ENCODE measurements at regions of chr6 and their contacts with region 1.

Region 1: DNA sequence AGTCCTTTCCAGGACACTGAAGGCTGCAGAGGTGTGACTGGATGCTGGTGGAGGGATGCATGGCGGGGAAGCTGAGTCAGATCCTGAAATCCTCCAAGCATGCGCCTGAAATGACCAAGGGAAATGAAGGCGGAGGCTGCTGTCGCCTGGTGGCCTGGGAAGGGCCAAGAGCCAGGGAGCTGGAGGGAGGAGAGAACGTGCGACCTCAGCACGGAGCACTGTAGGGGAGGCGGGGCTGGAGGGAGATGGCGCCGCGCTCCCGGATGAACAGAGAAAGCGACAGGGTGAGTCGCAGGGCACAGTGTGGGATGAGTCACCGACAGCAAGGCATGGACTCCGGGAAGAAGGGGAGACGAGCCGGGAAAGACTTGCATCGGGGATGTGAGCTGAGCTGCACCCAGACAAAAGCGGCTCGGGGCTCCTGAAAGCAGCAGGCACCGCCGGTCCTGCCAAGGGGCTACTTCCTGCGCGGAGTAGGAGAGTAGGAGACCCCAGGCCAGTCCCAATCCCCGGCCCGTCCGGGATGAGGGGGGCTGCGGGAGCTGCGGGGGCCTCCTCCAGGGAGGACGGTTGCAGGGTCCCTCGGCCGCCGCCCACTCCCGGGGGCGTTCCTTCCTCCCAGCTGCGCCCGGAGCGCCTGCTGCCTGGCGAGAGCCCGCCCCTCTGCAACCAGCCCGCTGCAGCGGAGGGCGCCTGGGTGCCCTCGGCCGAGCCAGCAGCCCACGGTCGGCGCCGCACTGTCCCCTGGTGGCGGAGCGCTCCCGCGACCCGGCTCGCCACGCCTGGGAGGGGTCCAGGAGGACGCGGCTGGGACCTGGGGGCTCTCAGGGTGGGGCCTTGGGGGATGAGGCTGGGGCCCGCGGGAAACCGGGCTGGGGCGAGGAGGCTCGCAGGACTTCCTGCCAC is 11.0 kb upstream of the NQO2 start:
- DNase-seq: peak; percentile 84 to 92
- H3K4me3 ChIP-seq: peak overlapping the region; percentile 52 to 70 (median 62)
- H3K27ac ChIP-seq: peak overlapping the region; percentile 99
- H3K4me1 ChIP-seq: peaks cover 8 to 26% (median 16%) of the 10 kb centered on the region in 4 experiments
- H3K27me3 ChIP-seq: no peaks in the 10 kb centered on the region
- CTCF ChIP-seq: peak; percentile 80 to 87 (median 82)
- EP300 ChIP-seq: peak in 1 of 2 experiments; percentile 2; a peak in 1 of 3 replicates
- POLR2A ChIP-seq: peak; percentile 68 to 94
- RAD21 ChIP-seq: peak; percentile 65 to 85

Region 2: GRCh38 chr6:2848851-2849250 is 139.8 kb before region 1 on chr6:
- CTCF ChIA-PET with region 1: interaction called, 39 read pairs
- POLR2A ChIA-PET with region 1: interaction called, 15 read pairs
- DNase-seq: no peak
- H3K4me3 ChIP-seq: no peak overlapping the region
- H3K27ac ChIP-seq: no peak overlapping the region
- H3K4me1 ChIP-seq: peaks cover 4 to 25% (median 9%) of the 10 kb centered on the region in 4 experiments
- H3K27me3 ChIP-seq: no peaks in the 10 kb centered on the region
- CTCF ChIP-seq: no peak
- EP300 ChIP-seq: no peak
- POLR2A ChIP-seq: peak in 1 of 2 experiments; percentile 62; a peak in 1 of 3 replicates
- RAD21 ChIP-seq: no peak

Region 3: GRCh38 chr6:2947445-2947844 is 41.2 kb before region 1 on chr6:
- CTCF ChIA-PET with region 1: interaction called, 142 read pairs
- POLR2A ChIA-PET with region 1: interaction called, 17 read pairs
- DNase-seq: peak in 1 of 2 experiments; percentile 30
- H3K4me3 ChIP-seq: no peak overlapping the region
- H3K27ac ChIP-seq: no peak overlapping the region
- H3K4me1 ChIP-seq: peaks cover 0 to 3% (median 1%) of the 10 kb centered on the region in 4 experiments; a peak in 4 of 7 replicates
- H3K27me3 ChIP-seq: no peaks in the 10 kb centered on the region
- CTCF ChIP-seq: no peak
- EP300 ChIP-seq: no peak
- POLR2A ChIP-seq: no peak
- RAD21 ChIP-seq: no peak

Region 4: GRCh38 chr6:2966347-2966746 is 22.3 kb before region 1 on chr6:
- CTCF ChIA-PET with region 1: interaction called, 11 read pairs
- POLR2A ChIA-PET with region 1: interaction called, 10 read pairs
- DNase-seq: no peak
- H3K4me3 ChIP-seq: no peak overlapping the region
- H3K27ac ChIP-seq: no peak overlapping the region
- H3K4me1 ChIP-seq: peaks cover 5 to 9% (median 6%) of the 10 kb centered on the region in 4 experiments
- H3K27me3 ChIP-seq: no peaks in the 10 kb centered on the region; a peak in 1 of 7 replicates
- CTCF ChIP-seq: no peak
- EP300 ChIP-seq: no peak
- POLR2A ChIP-seq: no peak
- RAD21 ChIP-seq: no peak

Region 5: GRCh38 chr6:3052481-3053230 is 64.0 kb after region 1 on chr6:
- CTCF ChIA-PET with region 1: interaction called, 5 read pairs
- POLR2A ChIA-PET with region 1: interaction called, 22 read pairs
- DNase-seq: no peak
- H3K4me3 ChIP-seq: peak overlapping the region in 2 of 4 experiments; percentile 37 to 63; a peak in 4 of 8 replicates
- H3K27ac ChIP-seq: no peak overlapping the region
- H3K4me1 ChIP-seq: peaks cover 2 to 9% (median 5%) of the 10 kb centered on the region in 4 experiments; a peak in 6 of 7 replicates
- H3K27me3 ChIP-seq: peaks cover 0 to 6% (median 0%) of the 10 kb centered on the region in 4 experiments; a peak in 2 of 7 replicates
- CTCF ChIP-seq: no peak
- EP300 ChIP-seq: no peak
- POLR2A ChIP-seq: no peak
- RAD21 ChIP-seq: no peak

Region 6: DNA sequence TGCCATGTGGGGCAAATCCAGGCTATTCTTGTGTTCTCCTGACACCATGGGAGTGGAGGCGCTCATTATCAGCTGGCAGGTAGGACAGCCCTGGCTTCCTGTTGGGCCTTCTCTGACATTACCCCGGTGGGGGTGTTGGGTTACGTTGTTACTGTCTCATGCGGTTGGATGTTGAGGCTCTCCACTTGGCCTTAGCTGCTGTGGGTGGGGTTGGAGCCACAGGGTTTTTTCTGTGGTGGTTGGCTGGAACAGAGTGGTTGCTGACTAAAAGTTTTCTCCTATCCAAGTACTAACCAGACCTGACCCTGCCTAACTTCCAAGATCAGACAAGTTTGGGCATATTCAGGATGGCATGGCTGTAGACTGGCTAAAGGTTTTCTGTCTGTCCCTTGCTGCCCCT is 99.8 kb after region 1 on chr6:
- CTCF ChIA-PET with region 1: no interaction called
- POLR2A ChIA-PET with region 1: no interaction called
- DNase-seq: no peak
- H3K4me3 ChIP-seq: peak overlapping the region in 1 of 4 experiments; percentile 38; a peak in 1 of 8 replicates
- H3K27ac ChIP-seq: no peak overlapping the region
- H3K4me1 ChIP-seq: no peaks in the 10 kb centered on the region
- H3K27me3 ChIP-seq: no peaks in the 10 kb centered on the region
- CTCF ChIP-seq: no peak
- EP300 ChIP-seq: no peak
- POLR2A ChIP-seq: no peak
- RAD21 ChIP-seq: no peak

Region 7: DNA sequence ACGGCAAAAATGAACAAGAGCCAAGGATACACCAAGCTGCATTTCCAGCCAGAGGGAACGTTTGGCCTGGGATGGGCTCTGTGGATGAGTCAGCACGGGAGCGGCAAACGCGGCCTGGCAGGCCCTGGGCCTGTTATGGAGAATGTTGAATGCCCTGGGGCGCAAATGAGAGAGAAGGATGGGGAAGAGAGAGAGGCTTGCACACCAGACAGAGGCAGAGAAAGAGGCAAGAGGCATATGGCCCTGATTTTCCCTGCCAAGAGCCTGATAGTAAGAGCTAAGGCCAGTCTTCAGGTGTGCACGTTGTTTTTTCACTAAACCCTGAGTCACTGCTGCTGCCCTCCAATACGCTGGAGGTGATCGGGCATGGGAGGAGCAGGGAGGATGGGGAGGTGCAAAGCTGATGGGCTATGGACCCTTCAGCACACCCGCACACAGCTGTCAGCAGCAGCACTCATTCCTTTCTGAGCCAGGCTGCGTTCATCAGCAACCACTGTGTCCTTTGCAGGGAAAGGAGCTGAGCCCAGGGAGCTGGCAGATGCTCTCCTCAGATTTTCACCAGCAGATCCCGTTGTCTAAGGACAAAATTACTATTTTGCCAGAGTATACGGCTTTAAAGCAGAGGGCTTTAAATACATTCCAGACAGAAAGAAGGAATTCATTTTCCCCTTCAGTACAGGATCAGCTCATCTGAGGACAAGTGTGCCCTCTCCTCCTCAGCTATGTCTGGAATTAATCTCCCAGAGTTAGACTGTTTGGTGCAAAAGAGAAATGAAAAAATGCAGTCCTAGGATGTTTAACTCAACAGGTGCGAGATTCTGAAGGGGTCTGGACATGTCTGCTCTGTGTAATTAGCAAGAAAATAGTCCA is 529.9 kb after region 1 on chr6:
- CTCF ChIA-PET with region 1: no interaction called
- POLR2A ChIA-PET with region 1: no interaction called
- DNase-seq: no peak
- H3K4me3 ChIP-seq: no peak overlapping the region
- H3K27ac ChIP-seq: 0 out of 2 replicates have a peak overlapping the region, but pooled peaks have one; percentile 3
- H3K4me1 ChIP-seq: 0 out of 7 replicates have a peak, but pooled peaks cover 0 to 2% (median 0%) of the 10 kb centered on the region in 4 experiments
- H3K27me3 ChIP-seq: no peaks in the 10 kb centered on the region; a peak in 1 of 7 replicates
- CTCF ChIP-seq: no peak
- EP300 ChIP-seq: no peak
- POLR2A ChIP-seq: no peak
- RAD21 ChIP-seq: no peak